Pancreas (tissue), 10 donors: ENCODE measurements at regions of chr7 and their contacts with region 1.

Region 1: DNA sequence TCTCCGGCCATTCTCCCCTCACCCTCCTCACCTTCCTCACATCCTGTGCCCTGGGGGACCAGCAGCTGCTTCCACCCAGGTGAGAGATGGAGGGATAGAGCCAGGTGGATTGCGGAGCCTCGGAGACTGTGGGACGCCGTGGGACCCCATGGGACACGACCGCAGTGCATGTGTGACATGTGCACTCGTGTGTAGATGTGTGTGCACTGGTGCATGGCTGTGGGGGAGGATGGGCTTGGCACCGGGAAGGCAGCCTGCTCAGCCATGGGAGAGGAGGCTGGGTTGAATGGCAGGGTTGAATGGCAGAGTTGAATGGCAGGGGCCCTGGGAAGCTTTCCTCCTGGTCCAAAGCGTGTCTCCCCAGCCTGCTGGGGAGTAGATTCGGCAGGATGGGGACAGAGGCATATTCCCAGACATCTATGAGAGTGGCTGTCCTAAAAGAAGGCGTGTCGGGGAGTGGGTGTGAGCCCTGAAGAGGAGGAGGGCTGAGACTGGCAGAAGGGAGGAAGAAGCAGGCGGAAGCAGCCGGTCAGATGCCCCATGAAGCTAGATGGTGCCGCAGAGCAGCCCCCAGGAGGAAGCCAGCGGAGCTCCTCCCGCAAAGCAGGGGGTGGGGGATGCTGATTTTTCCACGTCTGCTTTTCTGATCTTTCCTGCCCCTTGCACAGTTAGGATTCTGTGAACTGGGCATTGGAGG is 815 bp downstream of the GIMAP8 start:
- DNase-seq: peak in 1 of 6 donors; percentile 43
- ATAC-seq: peak in 3 of 4 donors; percentile 29 to 67 (median 67)
- H3K4me3 ChIP-seq: peak overlapping the region in 2 of 4 donors; percentile 11 to 37
- H3K27ac ChIP-seq: no peak overlapping the region
- H3K4me1 ChIP-seq: peaks cover 0 to 6% (median 0%) of the 10 kb centered on the region in 3 donors
- H3K27me3 ChIP-seq: no peaks in the 10 kb centered on the region
- CTCF ChIP-seq: no peak

Region 2: DNA sequence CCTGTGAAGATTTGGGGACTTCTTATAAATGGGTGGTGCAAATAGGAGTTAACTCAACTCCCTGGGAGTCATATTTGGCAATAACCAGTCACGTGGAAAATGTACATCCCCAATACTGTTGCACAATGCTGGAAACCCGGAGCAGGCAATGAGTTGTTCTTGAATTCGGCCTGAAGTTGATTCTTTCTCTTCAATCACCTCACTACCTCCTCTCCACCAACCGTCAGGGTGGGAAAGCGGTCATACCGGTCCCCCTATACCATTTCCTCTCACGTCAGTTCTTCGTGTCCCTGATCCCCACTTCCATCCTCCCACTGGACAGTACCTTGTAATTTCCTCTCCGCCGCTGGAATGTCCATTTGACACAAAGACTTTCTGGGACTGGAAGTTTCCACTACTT is 288.8 kb after region 1 on chr7:
- intact Hi-C with region 1: loop called in 1 of 3 experiments (anchors 10 kb)
- DNase-seq: no peak
- ATAC-seq: no peak
- H3K4me3 ChIP-seq: peak overlapping the region in 1 of 4 donors; percentile 4
- H3K27ac ChIP-seq: no peak overlapping the region
- H3K4me1 ChIP-seq: no peaks in the 10 kb centered on the region
- H3K27me3 ChIP-seq: peaks cover 0 to 4% (median 0%) of the 10 kb centered on the region in 4 donors
- CTCF ChIP-seq: no peak